Activated CD4-positive, alpha-beta memory T cell treated with anti-CD3 and anti-CD28 coated beads, Interleukin-2, amount 10 ng/mL, durations not matched to agents 7 days and 5 days (primary cell): ENCODE measurements at regions of chr19 and their contacts with region 1.

Region 1: GRCh38 chr19:54266133-54266532 is 9.1 kb upstream of the LILRB5 start:
- DNase-seq: peak; percentile 77
- H3K4me3 Mint-ChIP-seq: no peak overlapping the region
- H3K27ac Mint-ChIP-seq: no peak overlapping the region
- H3K4me1 Mint-ChIP-seq: no peaks in the 10 kb centered on the region
- H3K27me3 Mint-ChIP-seq: peaks cover 36% of the 10 kb centered on the region

Region 2: GRCh38 chr19:54168174-54168917 is 97.8 kb before region 1 on chr19:
- CTCF ChIA-PET with region 1: interaction called, 45 read pairs
- POLR2A ChIA-PET with region 1: interaction called, 3 read pairs
- DNase-seq: peak; percentile 90
- H3K4me3 Mint-ChIP-seq: no peak overlapping the region
- H3K27ac Mint-ChIP-seq: no peak overlapping the region
- H3K4me1 Mint-ChIP-seq: peaks cover 17% of the 10 kb centered on the region
- H3K27me3 Mint-ChIP-seq: peaks cover 1% of the 10 kb centered on the region

Region 3: GRCh38 chr19:54209811-54210494 is 56.2 kb before region 1 on chr19:
- CTCF ChIA-PET with region 1: interaction called, 16 read pairs
- POLR2A ChIA-PET with region 1: interaction called, 3 read pairs
- DNase-seq: no peak
- H3K4me3 Mint-ChIP-seq: no peak overlapping the region
- H3K27ac Mint-ChIP-seq: peak overlapping the region; percentile 74
- H3K4me1 Mint-ChIP-seq: peaks cover 71% of the 10 kb centered on the region
- H3K27me3 Mint-ChIP-seq: no peaks in the 10 kb centered on the region

Region 4: DNA sequence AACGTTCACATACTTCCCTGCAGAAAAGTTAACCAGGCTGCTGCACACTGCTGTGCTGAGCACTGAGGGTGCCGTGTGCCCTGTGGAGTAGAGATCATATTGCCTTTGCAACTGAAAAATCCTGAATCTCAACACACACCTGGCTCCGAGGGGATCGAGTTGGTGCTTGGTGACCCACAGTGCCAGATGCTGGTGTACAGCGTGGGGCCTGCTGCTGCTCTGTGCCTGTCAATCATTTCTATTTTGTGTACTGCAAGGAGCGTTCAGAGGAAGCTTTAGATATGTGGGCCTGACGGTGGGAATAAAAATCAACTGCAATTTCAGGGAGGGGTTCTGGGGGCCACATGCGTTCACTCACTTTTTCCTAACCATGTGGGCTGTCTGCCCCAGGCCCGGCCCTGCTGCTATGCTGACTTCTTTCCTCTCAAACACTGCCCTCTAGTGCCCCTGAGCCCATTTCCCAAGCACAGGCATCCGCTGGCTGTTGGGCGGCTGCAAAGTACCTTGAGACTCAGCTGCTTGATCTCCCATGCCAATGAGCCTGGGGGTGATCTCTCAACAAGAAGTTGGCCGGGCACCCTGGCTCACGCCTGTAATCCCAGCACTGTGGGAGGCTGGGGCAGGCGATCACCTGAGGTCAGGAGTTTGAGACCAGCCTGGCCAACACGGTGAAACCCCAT is 173.2 kb after region 1 on chr19:
- CTCF ChIA-PET with region 1: no interaction called
- POLR2A ChIA-PET with region 1: no interaction called
- DNase-seq: no peak
- H3K4me3 Mint-ChIP-seq: no peak overlapping the region
- H3K27ac Mint-ChIP-seq: no peak overlapping the region
- H3K4me1 Mint-ChIP-seq: peaks cover 10% of the 10 kb centered on the region
- H3K27me3 Mint-ChIP-seq: no peaks in the 10 kb centered on the region